SK-N-SH (cell line): ENCODE measurements at regions of chr1 and their contacts with region 1.

Region 1: DNA sequence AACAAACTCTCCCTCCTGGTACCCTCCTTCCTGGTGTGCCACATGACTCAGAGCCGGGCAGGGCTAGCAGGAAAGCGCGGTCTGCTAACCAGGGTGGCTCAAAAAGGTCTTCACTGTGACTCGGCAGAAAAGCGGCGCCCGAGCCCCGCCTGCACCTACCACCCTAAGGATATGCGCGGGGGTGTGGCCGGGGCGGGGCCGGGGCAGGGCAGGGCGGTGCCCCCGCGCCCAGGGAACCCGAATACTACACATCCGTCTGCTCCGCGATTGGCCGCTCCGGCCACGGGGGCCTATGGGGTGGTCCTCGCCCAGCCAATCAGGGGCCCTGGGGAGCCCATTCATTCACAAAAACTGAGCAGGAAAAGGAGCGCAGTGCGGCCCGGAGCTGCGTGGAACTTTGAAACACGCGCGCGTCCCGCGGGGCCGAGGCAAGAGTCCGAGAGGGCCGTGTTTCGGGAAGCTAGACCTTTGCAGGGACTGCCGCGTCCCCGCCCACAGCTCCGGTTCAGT is 1.7 kb downstream of the LRP8 start:
- DNase-seq: peak; percentile 96
- H3K4me3 ChIP-seq: peak overlapping the region; percentile 76 to 96
- H3K27ac ChIP-seq: peak overlapping the region; percentile 72 to 81
- H3K4me1 ChIP-seq: peaks cover 0 to 29% of the 10 kb centered on the region in 2 experiments; a peak in 2 of 4 replicates
- H3K27me3 ChIP-seq: no peaks in the 10 kb centered on the region
- CTCF ChIP-seq: no peak
- EP300 ChIP-seq: no peak
- RAD21 ChIP-seq: no peak; the same call in 1 of the 2 replicates

Region 2: DNA sequence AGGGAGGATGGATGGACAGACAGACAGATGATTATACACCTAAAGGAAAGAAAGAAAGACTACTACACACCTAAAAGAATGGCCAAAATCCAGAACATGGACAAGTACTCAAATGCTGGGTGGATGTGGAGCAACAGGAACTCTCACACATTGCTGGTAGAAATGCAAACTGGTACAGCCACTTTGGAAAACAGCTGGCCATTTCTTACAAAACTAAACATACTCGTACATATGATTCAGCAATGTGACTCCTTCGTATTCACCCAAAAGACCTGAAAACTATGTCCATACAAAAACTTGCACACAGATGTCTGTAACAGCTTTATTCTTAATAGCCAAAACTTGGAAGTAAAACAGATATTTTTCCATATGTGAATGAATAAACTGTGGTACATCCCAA is 870.5 kb before region 1 on chr1:
- CTCF ChIA-PET with region 1: no interaction called
- POLR2A ChIA-PET with region 1: no interaction called
- DNase-seq: no peak
- H3K4me3 ChIP-seq: no peak overlapping the region
- H3K27ac ChIP-seq: no peak overlapping the region
- H3K4me1 ChIP-seq: no peaks in the 10 kb centered on the region
- H3K27me3 ChIP-seq: no peaks in the 10 kb centered on the region
- CTCF ChIP-seq: no peak
- EP300 ChIP-seq: no peak
- RAD21 ChIP-seq: no peak

Region 3: GRCh38 chr1:53315456-53316423 is 10.4 kb before region 1 on chr1:
- CTCF ChIA-PET with region 1: interaction called, 3 read pairs
- POLR2A ChIA-PET with region 1: interaction called, 11 read pairs
- DNase-seq: peak; percentile 86
- H3K4me3 ChIP-seq: no peak overlapping the region
- H3K27ac ChIP-seq: peak overlapping the region; percentile 28 to 100; a peak in 3 of 4 replicates
- H3K4me1 ChIP-seq: peaks cover 0 to 92% of the 10 kb centered on the region in 2 experiments; a peak in 2 of 4 replicates
- H3K27me3 ChIP-seq: no peaks in the 10 kb centered on the region
- CTCF ChIP-seq: no peak
- EP300 ChIP-seq: peak in 1 of 2 experiments; percentile 52; a peak in 1 of 4 replicates
- RAD21 ChIP-seq: peak; percentile 29